ENCODE measurements at regions of chr3 and their contacts with region 1.

Region 1: GRCh38 chr3:192444096-192444790 is 283.1 kb downstream of the FGF12 start:
- DNase-seq: peak; percentile 47 to 77 (median 69)
- H3K4me3 ChIP-seq: no peak overlapping the region
- H3K27ac ChIP-seq: no peak overlapping the region
- H3K4me1 ChIP-seq: no peaks in the 10 kb centered on the region
- H3K27me3 ChIP-seq: peaks cover 0 to 50% (median 23%) of the 10 kb centered on the region in 5 experiments

Region 2: GRCh38 chr3:192130534-192131132 is 313.6 kb before region 1 on chr3:
- CTCF ChIA-PET with region 1: interaction called, 37 read pairs
- POLR2A ChIA-PET with region 1: no interaction called
- DNase-seq: peak; percentile 22 to 54 (median 50)
- H3K4me3 ChIP-seq: no peak overlapping the region
- H3K27ac ChIP-seq: no peak overlapping the region
- H3K4me1 ChIP-seq: no peaks in the 10 kb centered on the region
- H3K27me3 ChIP-seq: peaks cover 0 to 2% (median 0%) of the 10 kb centered on the region in 5 experiments

Region 3: DNA sequence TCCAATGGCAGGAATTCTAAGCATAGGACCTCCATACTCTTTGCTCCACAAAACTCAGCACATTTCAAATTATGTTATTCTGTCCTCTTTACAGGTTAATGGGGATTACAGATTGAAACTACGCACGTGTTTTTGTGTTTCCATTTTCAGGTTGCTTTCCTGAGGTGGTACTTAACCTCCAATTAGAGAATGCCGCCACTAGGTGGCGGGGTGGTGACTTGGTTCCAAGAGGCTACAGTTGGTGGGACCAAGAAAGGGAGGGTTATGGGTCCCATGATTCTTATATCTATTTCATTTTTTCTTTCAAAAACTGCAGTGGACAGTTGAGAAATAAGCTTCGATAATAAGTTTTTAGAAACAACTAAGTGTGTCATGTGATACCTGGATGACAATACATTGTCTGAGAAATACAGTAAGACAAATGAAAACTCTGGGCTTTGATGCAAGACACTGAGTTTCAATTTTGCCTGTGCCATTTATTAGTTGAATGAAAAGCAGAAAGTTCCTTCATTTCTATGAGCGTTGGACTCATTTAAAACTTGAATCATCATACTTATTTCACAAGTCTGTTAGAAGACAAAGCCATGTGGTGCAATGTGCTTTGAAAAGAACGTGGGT is 255.9 kb before region 1 on chr3:
- CTCF ChIA-PET with region 1: interaction called, 35 read pairs
- POLR2A ChIA-PET with region 1: no interaction called
- DNase-seq: peak; percentile 52 to 79 (median 75)
- H3K4me3 ChIP-seq: no peak overlapping the region
- H3K27ac ChIP-seq: no peak overlapping the region
- H3K4me1 ChIP-seq: peaks cover 0 to 2% (median 0%) of the 10 kb centered on the region in 4 experiments
- H3K27me3 ChIP-seq: peaks cover 0 to 2% (median 0%) of the 10 kb centered on the region in 5 experiments

Region 4: DNA sequence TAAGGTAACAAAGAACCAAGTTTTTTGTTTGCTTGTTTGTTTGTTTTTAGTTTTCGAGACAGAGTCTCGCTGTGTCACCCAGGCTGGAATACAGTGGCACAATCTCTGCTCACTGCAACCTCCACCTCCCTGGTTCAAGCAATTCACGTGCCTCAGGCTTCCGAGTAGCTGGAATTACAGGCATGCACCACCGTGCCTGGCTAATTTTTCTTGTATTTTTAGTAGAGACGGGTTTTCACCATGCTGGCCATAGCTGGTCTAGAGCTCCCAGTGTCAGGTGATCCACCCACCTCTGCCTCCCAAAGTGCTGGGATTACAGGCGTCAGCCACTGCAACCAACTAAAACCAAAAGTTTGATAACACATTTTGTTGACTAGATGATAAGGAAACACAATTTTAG is 89.6 kb before region 1 on chr3:
- CTCF ChIA-PET with region 1: no interaction called
- POLR2A ChIA-PET with region 1: no interaction called
- DNase-seq: no peak
- H3K4me3 ChIP-seq: no peak overlapping the region
- H3K27ac ChIP-seq: no peak overlapping the region
- H3K4me1 ChIP-seq: no peaks in the 10 kb centered on the region
- H3K27me3 ChIP-seq: no peaks in the 10 kb centered on the region

Region 5: GRCh38 chr3:192423003-192423349 is 21.3 kb before region 1 on chr3:
- CTCF ChIA-PET with region 1: interaction called, 16 read pairs
- POLR2A ChIA-PET with region 1: no interaction called
- DNase-seq: peak; percentile 25 to 37 (median 36)
- H3K4me3 ChIP-seq: no peak overlapping the region
- H3K27ac ChIP-seq: no peak overlapping the region
- H3K4me1 ChIP-seq: no peaks in the 10 kb centered on the region
- H3K27me3 ChIP-seq: peaks cover 0 to 8% (median 2%) of the 10 kb centered on the region in 5 experiments

Region 6: DNA sequence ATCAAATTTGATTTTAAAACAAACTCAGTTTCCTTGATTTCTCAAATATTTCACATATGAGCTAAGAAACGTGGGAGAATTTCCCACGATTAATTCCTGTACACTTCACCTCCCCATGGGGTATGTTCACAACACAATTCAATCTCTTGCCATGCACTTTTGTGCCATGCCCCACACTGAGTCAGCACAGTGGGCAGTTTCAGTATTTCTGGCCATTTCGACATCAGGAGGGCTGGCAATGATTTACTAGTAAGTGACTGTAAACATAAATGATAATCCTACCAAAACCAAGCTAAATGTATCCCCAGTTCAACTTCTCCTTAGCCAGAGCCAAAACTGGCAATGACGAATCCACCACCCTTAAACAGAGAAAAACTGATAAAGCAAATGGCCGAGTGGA is 10.5 kb before region 1 on chr3:
- CTCF ChIA-PET with region 1: interaction called, 33 read pairs
- POLR2A ChIA-PET with region 1: no interaction called
- DNase-seq: no peak
- H3K4me3 ChIP-seq: no peak overlapping the region
- H3K27ac ChIP-seq: no peak overlapping the region
- H3K4me1 ChIP-seq: no peaks in the 10 kb centered on the region
- H3K27me3 ChIP-seq: peaks cover 0 to 10% (median 2%) of the 10 kb centered on the region in 5 experiments

Region 7: GRCh38 chr3:192494174-192494573 is 49.9 kb after region 1 on chr3:
- CTCF ChIA-PET with region 1: no interaction called
- POLR2A ChIA-PET with region 1: no interaction called
- DNase-seq: peak; percentile 14 to 84 (median 75)
- H3K4me3 ChIP-seq: no peak overlapping the region
- H3K27ac ChIP-seq: no peak overlapping the region
- H3K4me1 ChIP-seq: peaks cover 0 to 4% (median under 1%) of the 10 kb centered on the region in 4 experiments
- H3K27me3 ChIP-seq: peaks cover 0 to 2% (median 0%) of the 10 kb centered on the region in 5 experiments

Region 8: DNA sequence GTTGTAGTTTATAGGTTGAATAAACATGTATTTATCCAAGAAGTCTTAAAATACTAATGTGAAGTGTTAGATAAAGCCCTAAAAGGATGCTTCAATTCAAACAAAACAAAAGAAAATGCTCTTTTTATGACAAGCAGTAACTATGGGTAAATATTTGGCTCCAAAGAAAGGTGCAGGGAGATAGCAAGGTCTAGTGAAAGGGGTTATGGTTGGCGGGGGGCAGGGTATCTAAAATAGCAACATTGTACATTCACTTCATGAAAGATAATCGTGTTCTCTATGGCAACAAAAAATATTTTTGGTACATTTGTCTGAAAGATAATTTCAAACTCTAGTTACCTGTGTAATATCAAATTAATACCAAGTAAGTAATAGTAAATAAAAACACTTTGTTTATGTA is 133.6 kb after region 1 on chr3:
- CTCF ChIA-PET with region 1: no interaction called
- POLR2A ChIA-PET with region 1: no interaction called
- DNase-seq: no peak
- H3K4me3 ChIP-seq: no peak overlapping the region
- H3K27ac ChIP-seq: no peak overlapping the region
- H3K4me1 ChIP-seq: no peaks in the 10 kb centered on the region
- H3K27me3 ChIP-seq: peaks cover 0 to 3% (median 0%) of the 10 kb centered on the region in 5 experiments

Region 9: DNA sequence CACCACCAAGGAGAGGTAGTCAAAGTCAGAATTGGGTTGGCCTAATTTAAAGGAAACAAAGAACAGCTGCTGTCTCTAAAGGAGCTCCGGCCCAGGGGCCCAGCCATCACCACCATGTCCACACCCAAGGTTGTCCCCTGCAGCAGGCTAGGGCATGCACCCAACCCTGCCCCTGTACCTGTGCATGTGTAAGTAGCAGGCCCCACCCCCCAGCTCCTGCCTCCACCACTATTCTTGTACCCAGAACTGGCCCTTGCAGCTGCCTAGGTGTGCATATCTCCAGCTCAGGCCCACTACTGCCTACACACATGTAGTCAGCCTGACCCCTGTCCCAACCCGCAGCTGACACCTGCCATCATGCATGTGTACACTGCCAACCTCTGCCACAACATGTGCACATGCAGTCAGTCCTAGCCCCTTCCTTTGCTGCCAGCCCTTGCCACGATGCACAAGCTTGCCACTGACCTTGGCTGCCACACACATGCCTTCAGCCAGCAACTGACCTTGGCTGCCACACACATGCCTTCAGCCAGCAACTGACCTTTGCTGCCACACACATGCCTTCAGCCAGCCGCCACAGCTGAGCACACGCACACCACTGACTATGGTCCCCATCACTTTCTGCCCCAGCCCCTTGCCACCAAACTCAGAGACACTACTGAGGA is 243.4 kb after region 1 on chr3:
- CTCF ChIA-PET with region 1: no interaction called
- POLR2A ChIA-PET with region 1: no interaction called
- DNase-seq: no peak
- H3K4me3 ChIP-seq: no peak overlapping the region
- H3K27ac ChIP-seq: no peak overlapping the region
- H3K4me1 ChIP-seq: no peaks in the 10 kb centered on the region
- H3K27me3 ChIP-seq: no peaks in the 10 kb centered on the region

Measured in common myeloid progenitor, CD34-positive (primary cell).